HEK293 (cell line): ENCODE measurements at regions of chr2 and their contacts with region 1.

Region 1: DNA sequence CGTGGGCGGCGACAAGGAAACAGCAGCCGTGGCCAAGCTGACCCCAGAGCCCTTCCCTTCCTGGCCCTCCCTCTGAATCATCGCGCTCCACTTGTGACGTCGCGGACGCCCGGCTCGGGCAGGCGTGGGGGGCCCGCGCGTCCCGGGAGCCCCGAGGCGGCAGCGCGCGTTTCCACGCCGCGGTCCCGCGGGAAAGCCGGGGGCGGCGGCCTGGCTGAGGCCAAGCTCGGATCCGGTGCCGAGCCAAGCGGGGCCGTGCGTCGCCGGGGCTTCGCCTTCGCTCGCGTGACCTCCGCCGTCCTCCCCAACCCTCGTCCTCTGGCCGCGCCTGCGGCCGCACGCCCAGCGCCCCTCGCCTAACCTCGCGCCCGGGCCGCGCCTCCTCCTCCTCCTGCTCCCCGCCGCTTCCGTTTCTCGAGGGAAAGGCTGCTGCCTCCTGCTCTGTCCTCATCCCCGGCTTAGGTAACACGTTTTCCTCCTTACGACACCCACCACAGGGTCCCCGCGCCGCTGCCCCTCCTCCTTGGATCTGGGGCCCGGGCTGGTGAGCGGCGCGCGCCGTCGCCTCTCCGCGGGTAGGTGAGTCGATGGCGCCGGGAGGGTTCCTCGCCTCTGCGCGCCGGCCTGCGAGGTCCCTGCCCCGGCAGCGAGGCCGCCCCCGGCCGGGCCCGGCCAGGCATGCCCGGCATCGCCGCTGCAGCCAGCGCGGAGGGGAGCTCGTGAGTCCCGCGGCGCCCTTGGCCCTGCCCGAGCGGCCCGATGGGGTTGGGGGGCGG is at the start of gene INPP1:
- H3K4me3 ChIP-seq: peak within 1 kb of the TSS; percentile 60
- H3K27ac ChIP-seq: peak within 1 kb of the TSS; percentile 89
- H3K4me1 ChIP-seq: 0 out of 2 replicates have a peak, but pooled peaks cover 6% of the 10 kb centered on the region
- CTCF ChIP-seq: no peak

Region 2: DNA sequence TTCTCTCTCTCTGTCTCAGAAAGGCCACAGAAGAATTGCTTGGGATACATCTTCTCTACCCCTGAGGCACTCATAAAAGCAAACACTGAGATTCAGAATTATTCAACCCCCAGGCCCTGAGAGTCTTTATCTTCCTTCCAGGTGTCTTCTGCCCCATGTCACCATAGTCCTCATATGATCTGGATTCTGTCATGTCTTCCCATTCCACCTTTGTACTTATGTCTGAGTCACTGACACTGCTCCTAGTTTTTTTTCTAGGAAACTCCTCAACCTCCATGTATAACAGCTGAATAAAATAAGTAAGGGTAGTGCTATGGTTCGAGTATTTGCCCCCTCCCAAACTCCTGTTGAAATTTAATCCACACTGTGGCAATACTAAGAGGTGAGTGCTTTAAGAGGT is 35.7 kb before region 1 on chr2:
- CTCF ChIA-PET with region 1: no interaction called
- POLR2A ChIA-PET with region 1: no interaction called
- H3K4me3 ChIP-seq: no peak overlapping the region
- H3K27ac ChIP-seq: no peak overlapping the region
- H3K4me1 ChIP-seq: no peaks in the 10 kb centered on the region; the same call in 1 of the 2 replicates
- CTCF ChIP-seq: no peak

Region 3: GRCh38 chr2:190319555-190320498 is 23.9 kb before region 1 on chr2 and contains the start of gene HIBCH:
- CTCF ChIA-PET with region 1: interaction called, 11 read pairs
- POLR2A ChIA-PET with region 1: interaction called, 11 read pairs
- H3K4me3 ChIP-seq: peak within 1 kb of the TSS; percentile 72
- H3K27ac ChIP-seq: peak within 1 kb of the TSS; percentile 58
- H3K4me1 ChIP-seq: no peaks in the 10 kb centered on the region
- CTCF ChIP-seq: peak; percentile 98

Region 4: DNA sequence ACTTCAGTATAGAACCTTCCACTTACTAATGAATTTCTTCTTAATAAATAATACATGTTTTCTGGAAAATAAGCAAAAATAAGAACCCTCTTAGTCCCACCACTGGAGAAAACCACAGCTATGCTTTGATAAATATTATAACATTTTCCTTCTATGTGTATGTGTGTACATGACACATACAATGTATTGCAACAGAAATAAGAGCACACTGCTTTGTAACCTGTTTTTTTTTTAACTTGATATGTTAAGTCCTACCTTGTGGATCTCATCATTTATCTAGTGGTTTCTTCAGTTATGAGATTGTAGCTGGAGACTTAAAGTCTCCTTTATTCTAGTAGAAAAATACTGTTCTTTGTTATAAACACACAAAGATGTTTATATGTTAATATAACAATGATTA is 16.9 kb after region 1 on chr2:
- CTCF ChIA-PET with region 1: no interaction called
- POLR2A ChIA-PET with region 1: no interaction called
- H3K4me3 ChIP-seq: no peak overlapping the region
- H3K27ac ChIP-seq: no peak overlapping the region
- H3K4me1 ChIP-seq: no peaks in the 10 kb centered on the region
- CTCF ChIP-seq: no peak